Activated CD4-positive, alpha-beta memory T cell treated with anti-CD3 and anti-CD28 coated beads, Interleukin-2, amount 10 ng/mL, durations not matched to agents 7 days and 5 days (primary cell): ENCODE measurements at regions of chr3 and their contacts with region 1.

Region 1: GRCh38 chr3:27721717-27722542 is at the start of gene EOMES:
- DNase-seq: peak; percentile 78
- H3K4me3 Mint-ChIP-seq: peak within 1 kb of the TSS; percentile 84
- H3K27ac Mint-ChIP-seq: peak within 1 kb of the TSS; percentile 60
- H3K4me1 Mint-ChIP-seq: peaks cover 42% of the 10 kb centered on the region
- H3K27me3 Mint-ChIP-seq: peaks cover 79% of the 10 kb centered on the region
- total RNA-seq, gene EOMES: 4.6 to 5.6 TPM

Region 2: GRCh38 chr3:27392950-27393679 is 328.8 kb before region 1 on chr3:
- CTCF ChIA-PET with region 1: no interaction called
- POLR2A ChIA-PET with region 1: no interaction called
- DNase-seq: no peak
- H3K4me3 Mint-ChIP-seq: no peak overlapping the region
- H3K27ac Mint-ChIP-seq: no peak overlapping the region
- H3K4me1 Mint-ChIP-seq: peaks cover 17% of the 10 kb centered on the region
- H3K27me3 Mint-ChIP-seq: no peaks in the 10 kb centered on the region

Region 3: DNA sequence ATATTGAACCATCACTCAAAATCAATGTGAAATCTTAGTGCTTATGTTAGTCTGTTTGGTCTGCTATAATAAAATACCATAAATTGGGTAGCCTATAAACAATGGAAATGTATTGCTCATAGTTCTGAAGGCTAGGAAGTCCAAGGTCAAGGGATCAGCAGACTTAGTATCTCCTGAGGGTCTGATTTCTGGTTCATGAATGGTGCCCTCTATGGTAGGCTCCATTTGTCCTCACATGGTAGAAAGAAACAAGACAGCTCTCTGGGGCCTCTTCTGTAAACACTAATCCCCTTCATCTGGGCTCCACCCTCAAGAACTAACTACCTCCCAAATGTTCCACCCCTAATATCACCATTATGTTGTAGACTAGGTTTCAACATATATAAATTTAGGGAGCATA is 15.2 kb after region 1 on chr3:
- CTCF ChIA-PET with region 1: interaction called, 11 read pairs
- POLR2A ChIA-PET with region 1: no interaction called
- DNase-seq: no peak
- H3K4me3 Mint-ChIP-seq: no peak overlapping the region
- H3K27ac Mint-ChIP-seq: no peak overlapping the region
- H3K4me1 Mint-ChIP-seq: no peaks in the 10 kb centered on the region
- H3K27me3 Mint-ChIP-seq: peaks cover 11% of the 10 kb centered on the region

Region 4: DNA sequence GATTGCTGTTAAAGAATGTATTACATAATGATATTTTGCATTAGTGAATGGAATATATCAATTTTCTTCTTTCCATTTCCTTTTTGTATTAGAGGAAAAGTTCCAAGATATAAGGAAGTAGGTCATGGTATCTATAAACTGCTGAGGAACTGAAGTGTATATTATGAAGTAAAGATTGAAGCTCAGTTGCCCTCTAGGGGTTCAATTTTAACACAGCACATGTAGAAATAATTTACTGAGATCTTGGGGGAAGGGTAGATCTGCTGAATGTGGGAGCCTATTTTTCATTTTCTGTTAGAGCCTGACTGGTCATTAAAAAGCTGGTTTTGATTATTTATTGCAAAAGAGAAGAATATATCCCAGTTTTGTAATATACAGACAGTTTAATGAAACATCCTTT is 564.7 kb after region 1 on chr3:
- CTCF ChIA-PET with region 1: interaction called, 16 read pairs
- POLR2A ChIA-PET with region 1: interaction called, 3 read pairs
- DNase-seq: no peak
- H3K4me3 Mint-ChIP-seq: no peak overlapping the region
- H3K27ac Mint-ChIP-seq: no peak overlapping the region
- H3K4me1 Mint-ChIP-seq: peaks cover 5% of the 10 kb centered on the region
- H3K27me3 Mint-ChIP-seq: no peaks in the 10 kb centered on the region

Region 5: DNA sequence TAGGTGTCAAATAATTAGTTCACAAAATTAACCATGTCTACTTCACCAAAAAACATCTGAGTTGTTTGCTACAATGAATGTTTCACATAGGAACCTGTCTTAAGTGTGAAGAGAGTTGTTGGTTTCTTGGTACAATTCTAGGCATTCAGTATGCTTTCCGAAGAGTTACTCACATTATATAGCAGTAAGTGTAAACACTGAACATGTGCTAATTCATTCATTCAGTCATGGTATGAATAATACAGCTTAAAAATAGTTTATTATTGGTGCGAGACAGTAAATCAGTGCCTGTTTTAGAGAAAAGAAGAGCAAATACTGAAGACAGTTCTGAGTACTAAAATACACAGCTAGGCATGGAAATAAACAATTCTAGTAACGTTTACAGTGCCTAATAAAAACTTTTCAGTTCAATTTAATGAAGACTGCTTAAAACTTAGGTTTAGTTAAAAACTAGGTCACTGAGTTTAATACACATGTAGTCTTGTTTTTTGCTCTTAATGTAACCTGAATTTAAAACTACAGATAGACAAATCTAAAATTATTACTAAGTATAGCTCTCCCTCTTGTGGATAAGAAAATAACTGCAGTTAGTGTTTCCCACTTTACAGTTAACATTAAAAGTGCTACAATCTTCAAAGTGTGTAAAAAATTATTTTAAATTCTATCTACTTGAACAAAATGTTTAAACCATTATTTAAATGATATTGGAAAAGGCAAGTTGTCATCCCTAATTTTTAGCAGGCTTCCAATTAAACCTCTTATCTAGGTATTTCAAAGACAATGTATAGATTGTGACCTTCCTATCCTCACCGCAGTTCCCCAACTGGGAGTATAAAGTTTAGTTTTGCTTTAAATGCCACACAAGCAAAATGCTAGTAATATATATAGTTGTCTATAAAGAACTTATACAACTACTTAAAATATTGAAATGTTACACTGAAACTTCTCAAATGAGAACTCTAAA is 606.5 kb after region 1 on chr3:
- CTCF ChIA-PET with region 1: interaction called, 73 read pairs
- POLR2A ChIA-PET with region 1: interaction called, 27 read pairs
- DNase-seq: no peak
- H3K4me3 Mint-ChIP-seq: no peak overlapping the region
- H3K27ac Mint-ChIP-seq: no peak overlapping the region
- H3K4me1 Mint-ChIP-seq: peaks cover 36% of the 10 kb centered on the region
- H3K27me3 Mint-ChIP-seq: no peaks in the 10 kb centered on the region

Region 6: DNA sequence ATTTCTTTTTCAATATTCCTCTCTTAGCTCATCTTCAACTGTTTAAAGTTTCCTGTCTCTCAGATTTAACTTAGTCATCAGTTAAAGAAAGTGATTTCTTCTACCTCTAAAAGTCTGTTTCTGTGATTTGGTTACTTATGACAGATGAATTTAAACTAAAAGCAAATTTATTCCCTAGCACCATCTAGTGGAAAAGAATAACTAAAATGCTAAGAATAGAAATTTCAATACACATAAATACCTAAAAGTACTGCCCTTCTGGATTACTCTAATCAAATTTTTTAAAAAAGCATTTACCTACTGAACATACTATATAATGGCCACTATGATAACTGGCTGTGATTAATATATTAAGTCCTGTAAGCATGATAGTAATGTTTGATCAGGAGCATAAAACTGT is 612.6 kb after region 1 on chr3:
- CTCF ChIA-PET with region 1: interaction called, 21 read pairs
- POLR2A ChIA-PET with region 1: interaction called, 4 read pairs
- DNase-seq: no peak
- H3K4me3 Mint-ChIP-seq: no peak overlapping the region
- H3K27ac Mint-ChIP-seq: no peak overlapping the region
- H3K4me1 Mint-ChIP-seq: peaks cover 6% of the 10 kb centered on the region
- H3K27me3 Mint-ChIP-seq: no peaks in the 10 kb centered on the region